Activated CD4-positive, alpha-beta memory T cell treated with anti-CD3 and anti-CD28 coated beads for 36 hours (primary cell): ENCODE measurements at regions of chrX and their contacts with region 1.

Region 1: DNA sequence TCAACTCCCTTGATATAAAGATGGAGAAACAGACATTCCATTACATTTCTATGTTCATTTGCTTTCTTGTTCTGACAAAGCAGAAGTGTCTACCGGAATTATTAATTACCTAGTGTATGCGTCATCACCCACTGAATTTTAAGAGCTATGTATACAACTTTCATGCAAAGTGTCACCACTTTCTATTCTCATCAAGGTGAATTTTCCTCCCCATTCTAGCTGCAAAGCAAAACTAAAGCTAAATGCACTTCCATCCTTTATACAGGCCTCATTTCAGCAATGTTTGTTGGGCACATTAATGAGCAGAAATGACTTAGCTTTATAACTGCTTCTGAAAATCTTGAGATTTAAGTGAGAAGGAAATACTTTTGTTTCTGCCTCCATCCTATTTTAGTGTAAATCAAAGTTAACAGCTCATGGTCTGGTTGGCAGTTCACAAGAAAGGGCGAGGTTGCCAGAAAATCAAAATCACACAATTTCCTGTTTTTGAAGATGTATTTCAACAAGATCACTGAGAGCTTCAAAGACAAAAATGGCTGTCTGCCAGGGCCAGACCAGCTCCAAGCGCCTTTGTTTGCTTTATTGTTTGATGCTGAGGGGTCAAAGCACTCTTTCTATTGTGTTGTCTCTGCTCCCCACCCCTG is 7.2 kb upstream of the FAM9C start:
- DNase-seq: peak; percentile 20
- H3K4me3 Mint-ChIP-seq: peak overlapping the region; percentile 4
- H3K27ac Mint-ChIP-seq: peak overlapping the region; percentile 95
- H3K4me1 Mint-ChIP-seq: peaks cover 72% of the 10 kb centered on the region
- H3K27me3 Mint-ChIP-seq: no peaks in the 10 kb centered on the region

Region 2: DNA sequence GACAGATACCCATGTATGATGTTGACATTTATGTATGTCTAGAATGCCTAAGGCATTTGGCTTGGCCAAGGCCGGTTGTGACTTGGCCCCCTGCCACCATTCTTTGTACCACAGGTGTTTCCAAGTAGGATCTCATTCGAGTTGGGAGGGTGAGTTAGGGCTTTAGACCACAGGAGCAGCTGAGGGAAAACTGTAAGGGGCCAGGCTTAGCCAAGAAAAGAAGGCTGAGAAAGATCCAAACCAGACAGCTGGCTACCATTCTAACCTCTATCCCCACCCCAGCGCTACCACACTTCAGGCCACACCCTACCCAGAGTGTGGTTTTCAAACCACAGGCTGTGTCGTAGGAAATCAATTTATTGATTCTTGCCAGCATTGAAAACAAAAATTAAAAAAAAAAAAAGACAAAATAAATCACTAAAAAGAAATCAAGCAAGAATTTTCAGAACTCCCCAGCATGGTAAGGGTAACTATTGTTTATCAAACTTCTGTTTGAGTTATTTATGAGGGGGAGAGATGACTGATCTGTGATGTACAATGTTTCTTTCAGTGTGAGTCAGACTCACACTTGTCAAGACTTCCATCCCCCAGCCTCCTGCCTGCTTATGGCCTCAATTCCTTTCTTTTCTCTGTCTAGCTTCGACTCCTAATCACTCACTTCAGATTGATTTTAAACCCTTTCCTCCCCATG is 66.9 kb before region 1 on chrX:
- CTCF ChIA-PET with region 1: no interaction called
- POLR2A ChIA-PET with region 1: no interaction called
- intact Hi-C with region 1: loop called (anchors 2 kb)
- DNase-seq: peak; percentile 65
- H3K4me3 Mint-ChIP-seq: peak overlapping the region; percentile 50
- H3K27ac Mint-ChIP-seq: peak overlapping the region; percentile 94
- H3K4me1 Mint-ChIP-seq: peaks cover 75% of the 10 kb centered on the region
- H3K27me3 Mint-ChIP-seq: no peaks in the 10 kb centered on the region

Region 3: DNA sequence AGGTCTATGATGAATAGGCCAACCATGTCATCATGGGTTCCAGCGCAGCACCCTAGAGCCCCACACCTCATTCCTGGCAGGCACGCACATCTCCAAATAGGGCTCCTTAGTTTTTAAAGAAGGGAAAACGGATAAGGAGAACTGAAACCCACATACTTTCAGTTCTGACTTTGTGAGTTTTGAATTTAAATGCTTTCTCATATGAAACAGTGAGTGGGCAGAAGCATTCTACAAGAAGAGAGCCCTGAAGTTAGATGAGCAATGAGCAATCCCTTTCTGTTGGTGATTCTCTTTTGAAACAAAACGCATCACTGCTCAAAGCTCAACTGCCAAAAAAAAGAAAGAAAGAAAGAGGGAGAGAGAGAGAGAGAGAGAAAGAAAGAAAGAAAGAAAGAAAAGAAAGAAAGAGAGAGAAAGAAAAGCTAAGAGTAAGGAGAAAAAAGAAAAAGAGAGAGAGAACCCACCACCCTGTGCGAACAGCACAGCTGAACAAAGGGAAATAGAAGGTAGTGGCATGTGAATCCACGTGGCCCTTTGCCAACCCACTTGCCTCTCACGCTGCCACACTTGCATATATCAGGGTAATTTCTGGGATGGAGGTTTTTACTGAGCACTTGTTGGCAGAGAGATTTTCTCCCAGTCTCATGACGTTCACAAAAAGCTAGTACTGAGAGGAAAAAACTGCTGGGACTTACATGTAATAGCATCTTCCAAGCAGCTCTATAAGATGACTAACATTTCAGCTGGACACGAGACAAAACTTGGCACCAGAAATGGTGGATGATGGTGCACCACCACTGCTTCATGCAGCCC is 45.8 kb before region 1 on chrX:
- CTCF ChIA-PET with region 1: interaction called, 3 read pairs
- POLR2A ChIA-PET with region 1: interaction called, 6 read pairs
- intact Hi-C with region 1: loop called (anchors 1 kb)
- DNase-seq: peak; percentile 52
- H3K4me3 Mint-ChIP-seq: peak overlapping the region; percentile 75
- H3K27ac Mint-ChIP-seq: peak overlapping the region; percentile 99
- H3K4me1 Mint-ChIP-seq: peaks cover 68% of the 10 kb centered on the region
- H3K27me3 Mint-ChIP-seq: no peaks in the 10 kb centered on the region

Region 4: DNA sequence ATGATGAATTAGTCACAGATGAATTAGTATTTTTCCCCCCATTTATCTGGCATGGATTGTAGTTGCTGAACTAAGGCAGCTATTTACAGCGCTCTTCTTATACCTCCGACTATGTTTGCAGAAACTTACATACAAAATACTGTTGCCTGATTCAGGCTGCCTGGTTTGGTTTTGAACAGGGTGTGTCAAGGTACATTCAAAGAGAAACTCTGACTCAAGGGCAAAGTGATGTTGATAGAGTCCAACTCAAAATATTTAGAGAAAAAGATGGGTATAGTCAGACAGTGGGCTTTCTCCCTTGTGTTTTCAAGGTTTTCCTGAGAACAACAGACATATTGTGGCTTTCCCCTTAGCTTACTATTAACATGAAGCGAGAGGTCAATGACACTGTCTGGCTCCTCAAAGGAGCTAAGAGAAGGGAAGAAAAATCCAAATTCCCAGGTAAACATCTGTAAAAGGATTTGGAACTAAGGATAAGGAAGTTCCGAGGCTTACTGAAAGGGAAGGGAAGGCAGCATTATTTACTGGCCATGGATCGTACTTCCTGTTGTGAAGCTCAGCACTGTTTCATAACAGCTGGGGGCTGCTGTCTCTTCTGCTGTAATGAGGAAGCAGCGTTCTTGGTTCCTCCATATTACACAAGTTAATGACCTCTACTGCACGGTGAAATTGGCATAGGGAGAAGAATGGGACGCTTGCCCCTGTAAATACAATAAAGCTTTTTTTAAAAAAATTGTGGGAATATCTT is 38.1 kb before region 1 on chrX:
- CTCF ChIA-PET with region 1: interaction called, 5 read pairs
- POLR2A ChIA-PET with region 1: interaction called, 10 read pairs
- intact Hi-C with region 1: loop called (anchors 1 kb)
- DNase-seq: peak; percentile 39
- H3K4me3 Mint-ChIP-seq: peak overlapping the region; percentile 62
- H3K27ac Mint-ChIP-seq: peak overlapping the region; percentile 88
- H3K4me1 Mint-ChIP-seq: peaks cover 65% of the 10 kb centered on the region
- H3K27me3 Mint-ChIP-seq: no peaks in the 10 kb centered on the region

Region 5: DNA sequence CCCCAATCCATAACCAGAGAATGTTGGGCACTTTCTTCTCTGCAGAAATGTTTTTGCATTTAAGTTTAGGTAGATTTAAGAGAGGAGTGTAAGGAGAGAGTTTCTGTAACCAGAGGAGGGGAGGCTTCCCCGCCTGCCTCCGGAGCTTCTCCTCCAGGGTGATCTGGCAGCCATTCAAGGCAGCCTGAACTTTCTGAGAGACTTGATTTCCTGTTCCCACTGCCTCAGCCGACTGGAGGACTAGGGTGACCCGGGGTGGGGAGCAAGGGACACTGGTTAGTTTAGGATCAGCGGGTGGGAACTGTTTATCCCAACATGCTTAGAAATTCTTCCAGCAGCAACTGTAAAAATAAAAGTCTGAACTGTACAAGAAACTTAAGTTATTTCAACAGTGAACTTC is 22.3 kb before region 1 on chrX:
- CTCF ChIA-PET with region 1: interaction called, 4 read pairs
- POLR2A ChIA-PET with region 1: interaction called, 6 read pairs
- intact Hi-C with region 1: loop called (anchors 2 kb)
- DNase-seq: peak; percentile 22
- H3K4me3 Mint-ChIP-seq: no peak overlapping the region
- H3K27ac Mint-ChIP-seq: peak overlapping the region; percentile 81
- H3K4me1 Mint-ChIP-seq: peaks cover 77% of the 10 kb centered on the region
- H3K27me3 Mint-ChIP-seq: no peaks in the 10 kb centered on the region